Endothelial cell of umbilical vein (primary cell): ENCODE measurements at regions of chr1 and their contacts with region 1.

Region 1: GRCh38 chr1:72037745-72038343 is 244.5 kb downstream of the NEGR1 start:
- DNase-seq: peak; percentile 47
- H3K4me3 ChIP-seq: no peak overlapping the region
- H3K27ac ChIP-seq: no peak overlapping the region
- H3K4me1 ChIP-seq: no peaks in the 10 kb centered on the region
- H3K27me3 ChIP-seq: no peaks in the 10 kb centered on the region
- CTCF ChIP-seq: peak; percentile 38 to 46
- POLR2A ChIP-seq: no peak

Region 2: DNA sequence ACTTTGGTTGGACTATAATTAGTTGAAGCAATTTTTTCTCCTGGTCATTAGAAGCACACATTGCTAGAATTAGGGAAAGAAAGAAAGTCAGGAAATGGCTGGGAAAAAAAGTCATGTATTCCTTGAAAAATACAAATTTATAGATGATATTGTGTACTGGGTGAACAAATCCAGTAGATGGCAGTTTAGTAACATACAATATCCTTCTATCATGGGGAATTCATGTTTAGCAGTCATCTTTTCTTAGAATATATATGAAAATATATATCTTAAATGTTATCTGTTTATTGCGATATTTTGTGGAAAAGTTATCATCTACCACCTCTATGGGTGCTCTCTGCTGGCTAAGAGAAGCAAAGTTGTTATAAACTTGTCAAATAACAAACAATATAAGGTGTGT is 943.9 kb before region 1 on chr1:
- CTCF ChIA-PET with region 1: interaction called, 16 read pairs
- POLR2A ChIA-PET with region 1: no interaction called
- dilution Hi-C with region 1: no loop called
- intact Hi-C with region 1: loop called (anchors 1 kb)
- DNase-seq: peak; percentile 31
- H3K4me3 ChIP-seq: no peak overlapping the region
- H3K27ac ChIP-seq: no peak overlapping the region
- H3K4me1 ChIP-seq: no peaks in the 10 kb centered on the region
- H3K27me3 ChIP-seq: peaks cover 0 to 2% of the 10 kb centered on the region in 2 experiments
- CTCF ChIP-seq: peak in 1 of 2 donors; percentile 9
- POLR2A ChIP-seq: no peak

Region 3: GRCh38 chr1:71521655-71522264 is 516.1 kb before region 1 on chr1:
- CTCF ChIA-PET with region 1: interaction called, 10 read pairs
- POLR2A ChIA-PET with region 1: no interaction called
- dilution Hi-C with region 1: no loop called
- intact Hi-C with region 1: no loop called
- DNase-seq: peak; percentile 52
- H3K4me3 ChIP-seq: no peak overlapping the region
- H3K27ac ChIP-seq: no peak overlapping the region
- H3K4me1 ChIP-seq: no peaks in the 10 kb centered on the region
- H3K27me3 ChIP-seq: no peaks in the 10 kb centered on the region
- CTCF ChIP-seq: peak; percentile 30 to 54
- POLR2A ChIP-seq: no peak

Region 4: GRCh38 chr1:71593523-71593922 is 444.3 kb before region 1 on chr1:
- CTCF ChIA-PET with region 1: interaction called, 17 read pairs
- POLR2A ChIA-PET with region 1: no interaction called
- dilution Hi-C with region 1: no loop called
- intact Hi-C with region 1: loop called (anchors 1 kb)
- DNase-seq: no peak
- H3K4me3 ChIP-seq: no peak overlapping the region
- H3K27ac ChIP-seq: no peak overlapping the region
- H3K4me1 ChIP-seq: no peaks in the 10 kb centered on the region
- H3K27me3 ChIP-seq: no peaks in the 10 kb centered on the region
- CTCF ChIP-seq: peak in 1 of 2 donors; percentile 8
- POLR2A ChIP-seq: no peak

Region 5: DNA sequence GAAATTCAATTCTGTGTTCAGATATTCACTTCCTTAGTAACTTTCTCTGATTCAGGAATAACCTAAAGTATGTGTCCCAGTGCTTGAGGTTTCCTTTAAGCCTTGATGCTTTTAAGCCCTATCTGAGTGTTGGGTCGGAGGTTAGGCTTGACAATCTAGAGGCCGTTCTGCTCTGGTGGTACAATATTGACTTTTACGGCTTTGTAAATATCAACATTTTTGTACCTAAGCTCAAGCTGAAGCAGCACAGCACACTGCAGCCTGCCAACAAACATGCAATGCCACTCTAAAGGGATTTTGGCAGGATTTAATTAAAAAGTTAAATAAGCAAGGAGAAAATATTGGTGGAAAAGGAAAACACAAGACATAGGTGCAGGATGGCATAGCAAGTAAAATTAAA is 34.8 kb before region 1 on chr1:
- CTCF ChIA-PET with region 1: no interaction called
- POLR2A ChIA-PET with region 1: no interaction called
- dilution Hi-C with region 1: no loop called
- intact Hi-C with region 1: no loop called
- DNase-seq: no peak
- H3K4me3 ChIP-seq: no peak overlapping the region
- H3K27ac ChIP-seq: no peak overlapping the region
- H3K4me1 ChIP-seq: no peaks in the 10 kb centered on the region
- H3K27me3 ChIP-seq: no peaks in the 10 kb centered on the region
- CTCF ChIP-seq: no peak
- POLR2A ChIP-seq: no peak

Region 6: GRCh38 chr1:72051538-72051937 is 13.7 kb after region 1 on chr1:
- CTCF ChIA-PET with region 1: interaction called, 32 read pairs
- POLR2A ChIA-PET with region 1: no interaction called
- dilution Hi-C with region 1: no loop called
- intact Hi-C with region 1: no loop called
- DNase-seq: peak; percentile 6
- H3K4me3 ChIP-seq: no peak overlapping the region
- H3K27ac ChIP-seq: no peak overlapping the region
- H3K4me1 ChIP-seq: peaks cover 10% of the 10 kb centered on the region
- H3K27me3 ChIP-seq: no peaks in the 10 kb centered on the region
- CTCF ChIP-seq: no peak
- POLR2A ChIP-seq: no peak

Region 7: GRCh38 chr1:72186733-72187307 is 149.0 kb after region 1 on chr1:
- CTCF ChIA-PET with region 1: interaction called, 10 read pairs
- POLR2A ChIA-PET with region 1: no interaction called
- dilution Hi-C with region 1: no loop called
- intact Hi-C with region 1: no loop called
- DNase-seq: peak; percentile 51
- H3K4me3 ChIP-seq: no peak overlapping the region
- H3K27ac ChIP-seq: no peak overlapping the region
- H3K4me1 ChIP-seq: no peaks in the 10 kb centered on the region
- H3K27me3 ChIP-seq: no peaks in the 10 kb centered on the region
- CTCF ChIP-seq: peak; percentile 25 to 48
- POLR2A ChIP-seq: no peak